CD4-positive, alpha-beta memory T cell (primary cell): ENCODE measurements at regions of chr1 and their contacts with region 1.

Region 1: GRCh38 chr1:161071886-161072371 is 2.2 kb upstream of the ARHGAP30 start:
- DNase-seq: peak in 4 of 5 donors; percentile 35 to 39 (median 37)
- H3K4me3 ChIP-seq: no peak overlapping the region
- H3K4me3 Mint-ChIP-seq: peak overlapping the region in 1 of 8 donors; percentile 17
- H3K27ac ChIP-seq: no peak overlapping the region
- H3K27ac Mint-ChIP-seq: peak overlapping the region in 6 of 7 donors; percentile 68 to 92 (median 72)
- H3K4me1 ChIP-seq: peaks cover 30% of the 10 kb centered on the region
- H3K4me1 Mint-ChIP-seq: peaks cover 24 to 56% (median 33%) of the 10 kb centered on the region in 4 donors
- H3K27me3 ChIP-seq: no peaks in the 10 kb centered on the region
- H3K27me3 Mint-ChIP-seq: no peaks in the 10 kb centered on the region

Region 2: DNA sequence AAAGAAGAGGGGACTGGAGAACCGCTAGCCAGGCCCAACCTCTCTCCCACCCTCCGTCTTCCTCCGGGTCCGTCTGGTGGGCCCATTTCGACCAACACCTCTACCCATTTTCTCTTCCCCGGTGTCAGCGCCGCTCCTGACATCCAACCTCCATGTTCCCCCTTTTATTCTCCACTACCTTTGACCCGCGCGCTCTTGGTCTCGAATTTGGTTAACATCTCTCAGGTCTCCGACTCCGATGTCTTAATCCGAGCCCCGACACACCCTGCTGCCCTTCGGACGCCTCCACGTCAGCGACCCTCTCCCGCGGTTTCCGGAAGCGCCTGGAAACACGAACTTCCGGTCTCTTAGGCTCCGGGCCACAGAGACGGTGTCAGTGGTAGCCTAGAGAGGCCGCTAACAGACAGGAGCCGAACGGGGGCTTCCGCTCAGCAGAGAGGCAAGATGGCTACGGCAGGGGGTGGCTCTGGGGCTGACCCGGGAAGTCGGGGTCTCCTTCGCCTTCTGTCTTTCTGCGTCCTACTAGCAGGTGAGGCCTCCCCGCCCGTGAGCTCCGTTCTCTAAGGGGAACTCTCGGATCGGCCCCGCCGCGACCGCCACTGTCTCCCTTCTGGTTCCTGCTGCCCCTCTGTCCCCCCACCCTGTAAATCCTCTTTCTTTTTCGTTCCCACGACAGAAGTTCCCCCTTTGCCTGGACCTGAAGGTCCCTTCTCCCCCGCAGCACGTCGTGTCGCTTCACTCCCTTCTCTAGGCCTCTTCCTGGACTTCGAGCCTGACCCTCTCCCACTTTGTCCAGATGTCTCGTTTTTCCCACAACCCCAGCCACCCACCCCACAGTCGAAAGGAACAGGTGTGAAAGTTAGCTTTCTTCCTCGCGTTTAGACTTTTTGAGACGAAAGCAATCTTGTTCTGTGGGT is 728.7 kb before region 1 on chr1 and contains the starts of genes COPA and NCSTN:
- CTCF ChIA-PET with region 1: no interaction called
- POLR2A ChIA-PET with region 1: no interaction called
- intact Hi-C with region 1: loop called (anchors 5 kb)
- DNase-seq: peak; percentile 89 to 95 (median 89)
- H3K4me3 ChIP-seq: peak within 1 kb of the TSS; percentile 77 to 96
- H3K4me3 Mint-ChIP-seq: peak within 1 kb of the TSS; percentile 99 to 100 (median 100)
- H3K27ac ChIP-seq: peak within 1 kb of the TSS; percentile 94
- H3K27ac Mint-ChIP-seq: peak within 1 kb of the TSS; percentile 96 to 100 (median 100)
- H3K4me1 ChIP-seq: peaks cover 44% of the 10 kb centered on the region
- H3K4me1 Mint-ChIP-seq: peaks cover 35 to 67% (median 49%) of the 10 kb centered on the region in 4 donors
- H3K27me3 ChIP-seq: no peaks in the 10 kb centered on the region
- H3K27me3 Mint-ChIP-seq: no peaks in the 10 kb centered on the region
- total RNA-seq, gene COPA: 128 to 132 TPM
- total RNA-seq, gene NCSTN: 62.2 to 68.0 TPM

Region 3: GRCh38 chr1:161013488-161014230 is 58.3 kb before region 1 on chr1:
- CTCF ChIA-PET with region 1: interaction called, 4 read pairs
- POLR2A ChIA-PET with region 1: interaction called, 34 read pairs
- intact Hi-C with region 1: loop called (anchors 2 kb)
- DNase-seq: peak; percentile 58 to 76 (median 63)
- H3K4me3 ChIP-seq: peak overlapping the region; percentile 14 to 53
- H3K4me3 Mint-ChIP-seq: peak overlapping the region; percentile 74 to 91 (median 84)
- H3K27ac ChIP-seq: peak overlapping the region; percentile 58
- H3K27ac Mint-ChIP-seq: peak overlapping the region; percentile 88 to 97 (median 94)
- H3K4me1 ChIP-seq: peaks cover 37% of the 10 kb centered on the region
- H3K4me1 Mint-ChIP-seq: peaks cover 24 to 56% (median 34%) of the 10 kb centered on the region in 4 donors
- H3K27me3 ChIP-seq: no peaks in the 10 kb centered on the region
- H3K27me3 Mint-ChIP-seq: no peaks in the 10 kb centered on the region

Region 4: GRCh38 chr1:161054805-161055204 is 17.1 kb before region 1 on chr1:
- CTCF ChIA-PET with region 1: interaction called, 12 read pairs
- POLR2A ChIA-PET with region 1: interaction called, 602 read pairs
- intact Hi-C with region 1: no loop called
- DNase-seq: no peak
- H3K4me3 ChIP-seq: no peak overlapping the region
- H3K4me3 Mint-ChIP-seq: no peak overlapping the region
- H3K27ac ChIP-seq: no peak overlapping the region
- H3K27ac Mint-ChIP-seq: peak overlapping the region in 3 of 7 donors; percentile 17 to 24 (median 18)
- H3K4me1 ChIP-seq: peaks cover 31% of the 10 kb centered on the region
- H3K4me1 Mint-ChIP-seq: peaks cover 14 to 43% (median 24%) of the 10 kb centered on the region in 4 donors
- H3K27me3 ChIP-seq: no peaks in the 10 kb centered on the region
- H3K27me3 Mint-ChIP-seq: no peaks in the 10 kb centered on the region

Region 5: GRCh38 chr1:161117759-161118581 is 46.0 kb after region 1 on chr1 and contains the starts of genes NIT1 and PFDN2:
- CTCF ChIA-PET with region 1: no interaction called
- POLR2A ChIA-PET with region 1: interaction called, 26 read pairs
- intact Hi-C with region 1: loop called (anchors 2 kb)
- DNase-seq: peak; percentile 83 to 87 (median 86)
- H3K4me3 ChIP-seq: peak within 1 kb of the TSS; percentile 32 to 95
- H3K4me3 Mint-ChIP-seq: peak within 1 kb of the TSS; percentile 94 to 98 (median 96)
- H3K27ac ChIP-seq: peak within 1 kb of the TSS; percentile 94
- H3K27ac Mint-ChIP-seq: peak within 1 kb of the TSS; percentile 94 to 99 (median 98)
- H3K4me1 ChIP-seq: peaks cover 64% of the 10 kb centered on the region
- H3K4me1 Mint-ChIP-seq: peaks cover 36 to 79% (median 61%) of the 10 kb centered on the region in 4 donors
- H3K27me3 ChIP-seq: no peaks in the 10 kb centered on the region
- H3K27me3 Mint-ChIP-seq: no peaks in the 10 kb centered on the region
- total RNA-seq, gene NIT1: 49.0 to 50.5 TPM
- total RNA-seq, gene PFDN2: 40.8 to 41.0 TPM

Region 6: DNA sequence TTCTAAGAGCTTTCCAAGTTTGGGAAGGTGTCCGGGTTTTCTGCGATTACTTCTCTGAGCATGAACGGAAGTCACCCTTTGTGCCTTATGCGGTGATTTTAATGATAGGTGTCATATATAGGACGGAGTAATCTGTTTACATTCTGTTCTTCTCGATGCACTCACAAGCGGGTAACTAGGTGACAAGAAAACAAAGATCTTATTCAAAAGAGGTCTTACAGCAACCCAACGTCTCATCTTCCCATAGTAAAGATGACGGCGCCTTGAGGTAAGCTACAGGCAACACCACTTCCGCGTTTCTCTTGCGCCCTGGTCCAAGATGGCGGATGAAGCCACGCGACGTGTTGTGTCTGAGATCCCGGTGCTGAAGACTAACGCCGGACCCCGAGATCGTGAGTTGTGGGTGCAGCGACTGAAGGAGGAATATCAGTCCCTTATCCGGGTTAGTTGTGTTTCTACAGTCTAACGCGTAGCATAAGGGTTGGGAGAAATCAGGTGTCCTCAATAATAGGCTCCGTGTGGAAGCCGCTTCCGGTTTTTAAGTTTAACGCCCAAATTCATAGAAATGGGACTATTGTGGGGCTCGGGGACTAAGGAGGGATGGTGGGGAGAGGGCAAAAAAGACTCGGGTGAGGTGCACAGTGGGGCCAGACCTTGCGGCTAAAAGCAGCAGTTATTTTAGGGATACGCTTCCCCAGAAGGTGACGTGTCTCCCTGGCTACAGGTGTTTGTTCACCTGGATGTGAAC is 81.9 kb after region 1 on chr1 and contains the start of gene UFC1:
- CTCF ChIA-PET with region 1: interaction called, 4 read pairs
- POLR2A ChIA-PET with region 1: interaction called, 36 read pairs
- intact Hi-C with region 1: loop called (anchors 1 kb)
- DNase-seq: peak; percentile 87 to 93 (median 90)
- H3K4me3 ChIP-seq: peak within 1 kb of the TSS; percentile 37 to 100
- H3K4me3 Mint-ChIP-seq: peak within 1 kb of the TSS; percentile 96 to 100 (median 99)
- H3K27ac ChIP-seq: peak within 1 kb of the TSS; percentile 99
- H3K27ac Mint-ChIP-seq: peak within 1 kb of the TSS; percentile 99 to 100 (median 100)
- H3K4me1 ChIP-seq: peaks cover 23% of the 10 kb centered on the region
- H3K4me1 Mint-ChIP-seq: peaks cover 23 to 46% (median 32%) of the 10 kb centered on the region in 4 donors
- H3K27me3 ChIP-seq: no peaks in the 10 kb centered on the region
- H3K27me3 Mint-ChIP-seq: no peaks in the 10 kb centered on the region
- total RNA-seq, gene UFC1: 87.2 to 87.4 TPM